ENCODE measurements at regions of chr1 and their contacts with region 1.

Region 1: GRCh38 chr1:174167265-174167803 is 8.0 kb downstream of the RABGAP1L start:
- DNase-seq: no peak
- H3K4me3 ChIP-seq: no peak overlapping the region
- H3K27ac ChIP-seq: no peak overlapping the region
- H3K4me1 ChIP-seq: no peaks in the 10 kb centered on the region
- H3K27me3 ChIP-seq: no peaks in the 10 kb centered on the region
- CTCF ChIP-seq: no peak

Region 2: DNA sequence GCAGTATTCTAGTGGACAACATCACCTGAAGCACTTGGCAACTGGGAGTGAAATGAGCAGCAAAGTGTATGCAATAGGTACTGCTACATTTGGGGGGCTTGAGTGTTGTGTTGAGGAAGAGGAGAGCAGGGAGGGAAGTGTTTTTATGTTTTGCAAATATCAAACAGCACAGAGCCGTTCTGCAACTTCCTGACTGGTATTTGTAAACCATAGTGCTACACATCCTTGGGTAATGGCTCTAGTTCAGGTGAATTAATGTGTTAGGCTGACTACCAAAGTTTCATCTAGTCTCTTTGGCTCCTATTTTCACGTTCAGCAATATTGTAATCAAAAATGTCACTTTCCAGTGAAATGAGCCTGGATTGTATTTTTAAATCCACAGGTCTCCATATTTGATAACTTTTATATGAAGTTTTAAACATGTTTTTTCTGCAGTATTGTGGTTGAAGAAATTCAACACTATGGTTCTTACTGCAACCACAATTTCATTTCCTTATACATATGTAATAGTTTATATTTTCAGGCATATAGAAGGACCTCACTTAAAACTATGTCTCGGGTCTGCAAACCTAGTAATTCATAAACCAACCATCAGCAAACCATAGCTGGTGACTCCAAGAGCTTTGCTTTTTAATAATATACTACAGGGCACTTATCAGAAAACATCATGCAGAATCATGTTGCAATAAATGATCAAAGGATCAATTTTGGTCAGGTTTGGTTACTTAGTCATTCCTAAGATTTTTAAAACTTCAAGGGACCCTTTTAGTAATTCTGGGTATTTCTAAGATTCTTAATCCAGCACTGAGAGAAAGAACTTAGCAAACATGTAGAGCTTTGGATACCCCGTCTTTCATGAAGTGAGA is 280.4 kb before region 1 on chr1:
- CTCF ChIA-PET with region 1: no interaction called
- POLR2A ChIA-PET with region 1: no interaction called
- intact Hi-C with region 1: no loop called
- DNase-seq: no peak
- H3K4me3 ChIP-seq: no peak overlapping the region
- H3K27ac ChIP-seq: no peak overlapping the region
- H3K4me1 ChIP-seq: no peaks in the 10 kb centered on the region
- H3K27me3 ChIP-seq: no peaks in the 10 kb centered on the region
- CTCF ChIP-seq: no peak

Region 3: DNA sequence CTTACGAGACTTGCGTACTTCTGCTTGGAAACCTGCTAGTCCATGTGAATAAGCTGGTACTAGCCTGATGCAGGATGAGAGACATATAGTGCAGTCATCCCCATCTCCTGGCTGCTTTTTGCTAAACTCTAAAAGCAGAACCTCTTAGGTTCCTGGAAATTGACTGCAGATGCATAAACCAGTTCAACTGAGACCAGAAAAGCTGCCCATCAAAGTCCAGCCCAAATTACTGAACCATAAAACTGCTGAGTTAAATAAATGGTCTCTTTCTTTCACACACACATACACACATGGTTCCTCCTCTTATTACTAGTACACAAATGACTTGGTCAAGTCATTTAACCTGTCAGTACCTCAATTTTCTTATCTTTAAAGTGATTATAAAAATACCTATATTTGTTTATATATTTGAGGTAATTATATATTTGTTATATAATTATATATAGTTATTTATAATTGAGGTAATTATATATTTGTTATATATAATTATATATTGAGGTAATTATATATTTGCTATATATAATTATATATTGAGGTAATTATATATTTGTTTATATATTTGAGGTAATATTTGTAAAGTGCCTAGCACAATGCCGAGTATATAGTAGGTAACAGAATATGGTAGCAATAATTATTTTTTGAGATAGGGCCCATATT is 33.2 kb before region 1 on chr1:
- CTCF ChIA-PET with region 1: no interaction called
- POLR2A ChIA-PET with region 1: interaction called, 12 read pairs
- intact Hi-C with region 1: no loop called
- DNase-seq: no peak
- H3K4me3 ChIP-seq: no peak overlapping the region
- H3K27ac ChIP-seq: no peak overlapping the region
- H3K4me1 ChIP-seq: no peaks in the 10 kb centered on the region
- H3K27me3 ChIP-seq: no peaks in the 10 kb centered on the region
- CTCF ChIP-seq: no peak